ENCODE measurements at regions of chr12 and their contacts with region 1.

Region 1: DNA sequence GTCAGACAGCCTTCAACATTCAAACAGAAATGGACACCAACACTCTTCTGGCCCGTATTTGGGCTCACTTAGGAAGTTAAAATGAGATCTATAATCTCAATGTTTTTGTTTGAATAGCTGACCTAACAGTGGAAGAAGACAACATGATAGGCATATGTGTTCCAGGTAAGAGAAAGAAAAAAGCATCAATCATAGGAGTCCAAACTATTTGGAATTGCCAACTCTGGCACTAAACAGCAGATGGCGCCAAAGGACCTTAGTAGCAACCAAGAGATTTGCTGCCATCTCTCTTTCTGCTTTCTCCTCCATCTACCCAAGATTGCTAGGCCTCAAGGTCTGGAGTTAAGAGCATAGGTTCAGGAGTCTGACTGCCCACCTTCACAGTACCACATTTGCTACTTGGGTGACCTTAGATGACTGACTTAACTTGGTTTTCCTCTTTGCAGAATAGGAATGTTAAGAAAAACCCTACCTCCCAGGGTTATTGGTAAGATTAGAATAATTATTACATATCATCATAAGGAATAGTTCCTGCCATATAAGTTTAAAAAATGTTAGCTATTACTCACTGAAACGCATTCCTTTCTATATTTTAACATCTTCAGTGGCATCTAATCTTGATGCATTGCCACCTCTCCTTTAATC is 30.2 kb downstream of the PEX5 start:
- DNase-seq: peak in 8 of 10 donors; percentile 40 to 90 (median 70)

Region 2: GRCh38 chr12:6914947-6915788 is 304.6 kb before region 1 on chr12:
- intact Hi-C with region 1: no loop called
- DNase-seq: peak in 2 of 10 donors; percentile 76 to 84

Region 3: GRCh38 chr12:7460375-7461259 is 240.9 kb after region 1 on chr12:
- intact Hi-C with region 1: loop called (anchors 2 kb)
- DNase-seq: peak in 8 of 10 donors; percentile 32 to 86 (median 59)